Naive thymus-derived CD4-positive, alpha-beta T cell (primary cell): ENCODE measurements at regions of chr6 and their contacts with region 1.

Region 1: DNA sequence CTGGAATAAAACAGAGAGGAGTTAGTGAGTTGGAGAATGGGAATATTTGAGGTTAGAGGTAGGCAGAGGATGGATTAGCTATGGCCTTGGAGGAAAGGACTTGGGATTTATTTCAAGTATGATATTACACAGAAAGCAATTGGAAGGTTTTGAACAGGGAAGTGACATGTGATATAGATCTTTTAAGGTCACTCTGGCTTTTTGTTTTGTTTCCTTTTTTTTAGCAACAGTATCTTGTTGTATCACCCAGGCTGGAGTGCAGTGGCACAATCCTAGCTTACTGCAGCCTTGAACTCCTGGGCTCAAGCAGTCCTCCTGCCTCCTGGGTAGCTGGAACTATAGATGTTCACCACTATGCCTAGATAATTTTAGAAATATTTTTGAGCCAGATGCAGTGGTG is 190.3 kb downstream of the UTRN start:
- DNase-seq: no peak
- ATAC-seq: no peak
- H3K4me3 ChIP-seq: no peak overlapping the region
- H3K4me3 Mint-ChIP-seq: no peak overlapping the region
- H3K27ac ChIP-seq: no peak overlapping the region
- H3K27ac Mint-ChIP-seq: peak overlapping the region in 8 of 9 donors; percentile 17 to 83 (median 72)
- H3K4me1 ChIP-seq: no peaks in the 10 kb centered on the region
- H3K4me1 Mint-ChIP-seq: peaks cover 0 to 8% (median 0%) of the 10 kb centered on the region in 7 donors
- H3K27me3 ChIP-seq: no peaks in the 10 kb centered on the region
- H3K27me3 Mint-ChIP-seq: no peaks in the 10 kb centered on the region

Region 2: GRCh38 chr6:144390886-144391285 is 84.5 kb before region 1 on chr6:
- CTCF ChIA-PET with region 1: no interaction called
- POLR2A ChIA-PET with region 1: no interaction called
- intact Hi-C with region 1: no loop called
- DNase-seq: no peak
- ATAC-seq: no peak
- H3K4me3 ChIP-seq: no peak overlapping the region
- H3K4me3 Mint-ChIP-seq: peak overlapping the region in 1 of 10 donors; percentile 1
- H3K27ac ChIP-seq: no peak overlapping the region
- H3K27ac Mint-ChIP-seq: peak overlapping the region in 1 of 9 donors; percentile 63
- H3K4me1 ChIP-seq: peaks cover 18 to 20% of the 10 kb centered on the region in 2 donors
- H3K4me1 Mint-ChIP-seq: peaks cover 19 to 80% (median 58%) of the 10 kb centered on the region in 7 donors
- H3K27me3 ChIP-seq: no peaks in the 10 kb centered on the region
- H3K27me3 Mint-ChIP-seq: no peaks in the 10 kb centered on the region

Region 3: DNA sequence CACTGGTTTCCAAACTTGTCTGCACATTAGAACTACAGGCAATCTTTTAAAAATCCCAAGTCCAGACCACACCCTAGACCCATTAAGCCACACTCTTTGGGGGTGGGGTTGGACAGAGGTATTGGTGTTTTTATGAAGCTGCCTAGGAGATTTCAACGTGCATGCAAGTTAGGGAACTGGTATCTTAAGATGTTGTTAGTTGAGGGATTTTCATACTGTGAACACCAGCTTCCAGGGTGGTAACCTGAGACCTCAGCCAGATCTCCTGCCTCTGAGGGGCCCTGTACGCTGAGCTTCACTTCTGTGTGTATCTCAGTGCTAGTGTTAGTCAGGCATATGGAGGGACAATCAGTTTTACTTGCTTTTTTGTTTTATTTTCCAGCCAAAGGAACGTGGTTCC is 52.2 kb before region 1 on chr6:
- CTCF ChIA-PET with region 1: no interaction called
- POLR2A ChIA-PET with region 1: no interaction called
- intact Hi-C with region 1: no loop called
- DNase-seq: no peak
- ATAC-seq: no peak
- H3K4me3 ChIP-seq: no peak overlapping the region
- H3K4me3 Mint-ChIP-seq: no peak overlapping the region
- H3K27ac ChIP-seq: no peak overlapping the region
- H3K27ac Mint-ChIP-seq: no peak overlapping the region
- H3K4me1 ChIP-seq: peaks cover 0 to 9% of the 10 kb centered on the region in 2 donors
- H3K4me1 Mint-ChIP-seq: peaks cover 13 to 31% (median 23%) of the 10 kb centered on the region in 7 donors
- H3K27me3 ChIP-seq: no peaks in the 10 kb centered on the region
- H3K27me3 Mint-ChIP-seq: no peaks in the 10 kb centered on the region

Region 4: DNA sequence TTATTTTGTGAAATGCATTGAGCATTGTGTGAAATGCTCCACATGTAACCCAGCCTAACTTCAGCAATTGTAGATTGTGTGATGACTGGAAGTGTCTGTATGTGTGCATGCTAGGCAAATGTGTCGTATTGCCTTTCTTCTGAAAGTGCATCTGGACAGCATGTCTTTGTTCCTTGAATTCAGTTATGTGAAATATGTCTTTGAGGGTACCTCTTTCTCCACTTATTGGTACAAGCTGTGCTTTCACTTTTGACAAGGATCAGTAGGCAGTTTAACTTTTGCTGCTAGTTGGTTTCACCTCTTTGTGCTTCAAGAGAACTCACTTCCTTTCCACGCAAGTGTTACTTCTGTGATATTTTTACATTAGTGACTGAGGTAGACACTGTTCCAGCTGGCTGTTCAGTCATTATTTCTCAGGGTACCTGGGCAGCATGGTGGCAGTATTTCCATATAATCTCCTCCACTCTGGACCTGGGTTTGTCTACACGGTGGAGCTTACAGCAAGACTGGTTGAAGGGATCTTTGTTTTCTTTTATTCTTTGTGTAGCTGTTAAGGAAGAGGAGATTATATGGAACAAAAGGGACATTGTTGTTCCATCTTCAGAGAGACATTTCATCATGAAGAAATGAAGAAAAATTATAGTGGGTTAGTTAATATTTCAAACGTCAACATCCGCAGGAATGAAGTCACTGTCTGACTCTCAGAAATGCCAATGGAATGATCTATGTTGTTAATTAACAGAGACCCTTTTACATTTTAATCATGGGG is 14.9 kb before region 1 on chr6:
- CTCF ChIA-PET with region 1: interaction called, 3 read pairs
- POLR2A ChIA-PET with region 1: no interaction called
- intact Hi-C with region 1: loop called in 1 of 2 experiments (anchors 2 kb)
- DNase-seq: peak in 5 of 9 donors; percentile 15 to 39 (median 26)
- ATAC-seq: peak; percentile 74
- H3K4me3 ChIP-seq: no peak overlapping the region
- H3K4me3 Mint-ChIP-seq: peak overlapping the region in 9 of 10 donors; percentile 12 to 81 (median 69)
- H3K27ac ChIP-seq: peak overlapping the region; percentile 12
- H3K27ac Mint-ChIP-seq: peak overlapping the region; percentile 45 to 91 (median 87)
- H3K4me1 ChIP-seq: peaks cover 12 to 13% of the 10 kb centered on the region in 2 donors
- H3K4me1 Mint-ChIP-seq: peaks cover 8 to 37% (median 28%) of the 10 kb centered on the region in 7 donors
- H3K27me3 ChIP-seq: no peaks in the 10 kb centered on the region
- H3K27me3 Mint-ChIP-seq: no peaks in the 10 kb centered on the region